Mammary epithelial cell (primary cell): ENCODE measurements at regions of chr4 and their contacts with region 1.

Region 1: DNA sequence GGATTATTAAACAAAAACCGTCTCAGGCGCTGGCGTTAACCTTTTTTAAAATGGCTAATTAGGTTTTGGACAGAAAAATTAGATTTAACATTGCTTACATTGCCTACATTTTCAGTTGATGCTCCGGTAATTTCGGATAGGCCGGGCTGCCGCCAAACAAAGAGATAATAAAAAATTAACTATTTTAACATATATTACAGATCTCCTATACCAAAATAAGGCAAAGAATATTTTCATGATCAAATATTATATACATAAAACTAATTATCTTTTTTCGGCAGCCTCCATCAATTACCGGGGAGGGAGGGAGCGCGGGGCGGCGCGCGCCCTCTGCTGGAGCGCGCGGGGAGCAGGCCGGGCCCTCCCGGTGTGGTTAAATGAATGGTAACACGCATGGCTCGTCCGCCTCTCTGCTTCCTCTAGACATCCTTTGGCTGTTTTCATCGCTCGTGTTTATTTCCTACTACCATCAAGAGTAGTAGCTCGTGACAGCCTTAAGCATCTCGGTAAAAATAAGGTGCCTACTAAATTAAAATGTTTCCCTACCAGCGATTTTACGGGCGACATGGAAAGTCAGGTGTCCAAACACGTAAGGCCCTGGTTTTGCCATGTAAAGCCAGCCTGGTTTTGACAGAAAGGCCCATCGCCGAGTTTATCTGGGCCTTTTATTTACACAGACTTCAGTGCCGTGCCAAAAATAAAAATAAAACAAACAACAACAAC is 52.4 kb upstream of the TMEM33 start:
- DNase-seq: peak; percentile 21
- H3K4me3 ChIP-seq: no peak overlapping the region
- H3K27ac ChIP-seq: no peak overlapping the region
- H3K4me1 ChIP-seq: peaks cover 12% of the 10 kb centered on the region
- H3K27me3 ChIP-seq: peaks cover 54% of the 10 kb centered on the region
- CTCF ChIP-seq: peak; percentile 69 to 94

Region 2: GRCh38 chr4:41853973-41854372 is 28.8 kb before region 1 on chr4:
- CTCF ChIA-PET with region 1: no interaction called
- dilution Hi-C with region 1: no loop called
- in situ Hi-C with region 1: no loop called
- intact Hi-C with region 1: loop called (anchors 2 kb)
- DNase-seq: no peak
- H3K4me3 ChIP-seq: no peak overlapping the region
- H3K27ac ChIP-seq: no peak overlapping the region
- H3K4me1 ChIP-seq: no peaks in the 10 kb centered on the region
- H3K27me3 ChIP-seq: no peaks in the 10 kb centered on the region
- CTCF ChIP-seq: peak; percentile 16 to 29